ENCODE measurements at regions of chr4 and their contacts with region 1.

Region 1: DNA sequence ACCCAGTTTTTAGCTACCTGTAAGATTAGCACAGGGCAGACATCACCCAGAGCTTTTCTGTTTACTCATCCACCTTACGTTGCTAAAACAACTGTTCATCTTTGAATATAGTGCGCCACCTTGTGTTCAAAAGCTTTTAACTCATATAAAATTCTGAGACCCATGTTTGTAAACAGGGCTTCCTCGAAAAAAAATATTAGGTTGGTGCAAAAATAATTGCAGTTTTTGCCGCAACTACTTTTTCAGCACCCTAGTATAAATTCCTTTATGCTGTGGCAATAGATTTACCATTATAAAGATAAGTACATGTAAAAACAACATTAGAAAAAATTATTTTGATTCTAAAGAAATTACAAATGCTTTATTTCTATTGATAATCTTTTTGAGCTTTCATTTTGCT is 147.9 kb downstream of the LRBA start:
- DNase-seq: peak; percentile 41
- ATAC-seq: peak; percentile 96
- H3K4me3 ChIP-seq: no peak overlapping the region
- H3K27ac ChIP-seq: no peak overlapping the region
- H3K4me1 ChIP-seq: no peaks in the 10 kb centered on the region
- H3K27me3 ChIP-seq: no peaks in the 10 kb centered on the region
- CTCF ChIP-seq: peak; percentile 37 to 59 (median 46); a peak in 5 of 6 replicates
- EP300 ChIP-seq: no peak
- POLR2A ChIP-seq: no peak
- RAD21 ChIP-seq: peak; percentile 86

Region 2: DNA sequence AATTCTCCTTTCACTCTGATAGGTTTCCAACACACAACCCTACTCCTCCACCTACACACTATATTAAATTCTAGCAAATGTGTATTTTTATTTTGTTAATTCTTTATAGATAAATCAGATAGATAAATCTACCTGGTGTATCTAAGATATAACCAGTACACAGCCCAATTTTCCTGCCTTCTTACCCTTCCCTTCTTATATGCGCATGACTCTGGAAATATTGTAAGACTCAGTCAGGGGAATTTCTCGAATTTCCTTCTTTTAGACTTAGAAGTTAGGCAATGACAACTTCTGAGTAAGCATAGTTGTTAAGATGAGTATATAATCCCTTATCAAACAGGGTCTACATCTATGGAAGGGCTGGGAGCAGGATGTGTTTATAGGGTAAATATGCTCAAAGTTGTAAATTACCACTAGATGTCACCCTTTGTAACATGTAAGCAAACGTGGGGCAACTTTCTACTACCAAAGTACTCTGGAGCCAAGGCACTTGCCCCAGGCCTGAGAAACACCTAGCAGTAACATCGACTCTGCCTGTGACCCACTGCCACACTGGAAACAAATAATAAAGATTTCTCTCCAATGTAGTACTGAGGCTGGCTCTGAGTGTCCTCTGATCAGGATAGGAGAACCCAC is 1496.2 kb before region 1 on chr4:
- CTCF ChIA-PET with region 1: no interaction called
- POLR2A ChIA-PET with region 1: no interaction called
- RAD21 ChIA-PET with region 1: no interaction called
- SMC1A ChIA-PET with region 1: no interaction called
- in situ Hi-C with region 1: no loop called
- intact Hi-C with region 1: no loop called
- DNase-seq: no peak
- ATAC-seq: peak; percentile 92
- H3K4me3 ChIP-seq: no peak overlapping the region
- H3K27ac ChIP-seq: no peak overlapping the region
- H3K4me1 ChIP-seq: no peaks in the 10 kb centered on the region
- H3K27me3 ChIP-seq: no peaks in the 10 kb centered on the region
- CTCF ChIP-seq: peak; percentile 25 to 58 (median 39); a peak in 4 of 6 replicates
- EP300 ChIP-seq: no peak
- POLR2A ChIP-seq: no peak
- RAD21 ChIP-seq: peak; percentile 45

Region 3: GRCh38 chr4:149999485-150000074 is 867.6 kb before region 1 on chr4:
- CTCF ChIA-PET with region 1: interaction called, 3 read pairs
- POLR2A ChIA-PET with region 1: no interaction called
- RAD21 ChIA-PET with region 1: interaction called, 3 read pairs
- SMC1A ChIA-PET with region 1: no interaction called
- in situ Hi-C with region 1: no loop called
- intact Hi-C with region 1: loop called (anchors 5 kb)
- DNase-seq: no peak
- ATAC-seq: peak; percentile 63
- H3K4me3 ChIP-seq: no peak overlapping the region
- H3K27ac ChIP-seq: no peak overlapping the region
- H3K4me1 ChIP-seq: no peaks in the 10 kb centered on the region
- H3K27me3 ChIP-seq: no peaks in the 10 kb centered on the region
- CTCF ChIP-seq: peak; percentile 57 to 70 (median 61)
- EP300 ChIP-seq: no peak
- POLR2A ChIP-seq: no peak
- RAD21 ChIP-seq: peak; percentile 81

Region 4: GRCh38 chr4:150297861-150298474 is 569.2 kb before region 1 on chr4:
- CTCF ChIA-PET with region 1: interaction called, 107 read pairs
- POLR2A ChIA-PET with region 1: no interaction called
- RAD21 ChIA-PET with region 1: interaction called, 20 read pairs
- SMC1A ChIA-PET with region 1: interaction called, 47 read pairs
- in situ Hi-C with region 1: loop called (anchors 5 kb)
- intact Hi-C with region 1: loop called (anchors 1 kb)
- DNase-seq: peak; percentile 8
- ATAC-seq: peak; percentile 75
- H3K4me3 ChIP-seq: no peak overlapping the region
- H3K27ac ChIP-seq: no peak overlapping the region
- H3K4me1 ChIP-seq: no peaks in the 10 kb centered on the region
- H3K27me3 ChIP-seq: no peaks in the 10 kb centered on the region
- CTCF ChIP-seq: peak; percentile 49 to 64 (median 54)
- EP300 ChIP-seq: no peak
- POLR2A ChIP-seq: no peak
- RAD21 ChIP-seq: peak; percentile 84

Region 5: DNA sequence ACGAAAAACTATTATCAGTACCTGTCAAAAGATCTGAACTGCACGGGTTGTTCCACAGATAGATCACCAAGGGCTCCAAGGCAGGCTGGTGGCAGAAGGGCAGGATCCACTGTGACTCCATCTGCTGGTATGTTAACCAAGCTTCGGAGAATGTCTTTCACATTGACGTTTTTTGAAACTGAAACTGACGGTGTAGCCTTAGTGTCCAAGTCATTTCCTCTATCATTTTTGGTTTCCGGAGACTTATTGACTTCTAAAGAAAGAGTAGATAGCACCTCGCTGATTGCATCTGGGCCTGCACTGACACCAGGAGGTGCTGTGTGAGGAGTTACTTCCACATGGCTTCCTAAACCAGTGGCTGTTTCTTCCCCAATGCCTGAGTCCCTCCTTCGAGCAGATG is 39.0 kb before region 1 on chr4:
- CTCF ChIA-PET with region 1: interaction called, 19 read pairs
- POLR2A ChIA-PET with region 1: no interaction called
- RAD21 ChIA-PET with region 1: interaction called, 14 read pairs
- SMC1A ChIA-PET with region 1: interaction called, 8 read pairs
- in situ Hi-C with region 1: no loop called
- intact Hi-C with region 1: no loop called
- DNase-seq: peak; percentile 77
- ATAC-seq: peak; percentile 98
- H3K4me3 ChIP-seq: no peak overlapping the region
- H3K27ac ChIP-seq: peak overlapping the region; percentile 42
- H3K4me1 ChIP-seq: peaks cover 6% of the 10 kb centered on the region
- H3K27me3 ChIP-seq: no peaks in the 10 kb centered on the region
- CTCF ChIP-seq: peak; percentile 26 to 61 (median 41); a peak in 5 of 6 replicates
- EP300 ChIP-seq: no peak
- POLR2A ChIP-seq: no peak
- RAD21 ChIP-seq: peak; percentile 29; the same call in 1 of the 2 replicates

Region 6: GRCh38 chr4:150855981-150856510 is 11.1 kb before region 1 on chr4:
- CTCF ChIA-PET with region 1: interaction called, 44 read pairs
- POLR2A ChIA-PET with region 1: no interaction called
- RAD21 ChIA-PET with region 1: interaction called, 15 read pairs
- SMC1A ChIA-PET with region 1: interaction called, 22 read pairs
- in situ Hi-C with region 1: no loop called
- intact Hi-C with region 1: no loop called
- DNase-seq: no peak
- ATAC-seq: peak; percentile 89
- H3K4me3 ChIP-seq: no peak overlapping the region
- H3K27ac ChIP-seq: no peak overlapping the region
- H3K4me1 ChIP-seq: no peaks in the 10 kb centered on the region
- H3K27me3 ChIP-seq: no peaks in the 10 kb centered on the region
- CTCF ChIP-seq: no peak
- EP300 ChIP-seq: no peak
- POLR2A ChIP-seq: no peak
- RAD21 ChIP-seq: no peak

Region 7: DNA sequence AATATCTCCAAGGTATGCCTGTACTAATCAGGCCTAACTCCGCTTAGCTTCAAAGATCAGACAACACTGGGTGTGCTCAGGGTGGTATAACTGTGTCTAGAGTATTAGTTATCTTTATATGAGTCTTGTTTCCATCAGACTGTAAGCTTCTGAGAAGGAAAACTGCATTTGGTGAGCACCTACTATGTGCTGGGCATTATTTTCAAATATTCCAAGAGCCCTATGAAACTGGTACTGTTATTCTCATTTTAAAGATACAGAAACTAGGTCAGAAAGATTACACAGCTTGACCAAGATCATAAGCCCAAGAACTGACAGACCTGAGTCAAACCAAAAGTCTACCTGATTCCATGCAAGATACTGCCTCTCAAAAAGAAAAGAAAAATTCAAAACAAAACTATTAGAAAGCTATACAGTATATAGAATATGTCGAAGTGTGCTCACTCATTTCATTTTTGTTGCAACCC is 103.6 kb after region 1 on chr4:
- CTCF ChIA-PET with region 1: interaction called, 16 read pairs
- POLR2A ChIA-PET with region 1: no interaction called
- RAD21 ChIA-PET with region 1: interaction called, 6 read pairs
- SMC1A ChIA-PET with region 1: interaction called, 6 read pairs
- in situ Hi-C with region 1: no loop called
- intact Hi-C with region 1: no loop called
- DNase-seq: no peak
- ATAC-seq: peak; percentile 78
- H3K4me3 ChIP-seq: 0 out of 2 replicates have a peak overlapping the region, but pooled peaks have one; percentile 32
- H3K27ac ChIP-seq: no peak overlapping the region
- H3K4me1 ChIP-seq: peaks cover 29% of the 10 kb centered on the region
- H3K27me3 ChIP-seq: no peaks in the 10 kb centered on the region
- CTCF ChIP-seq: no peak
- EP300 ChIP-seq: no peak
- POLR2A ChIP-seq: no peak
- RAD21 ChIP-seq: no peak

Measured in GM12878 (cell line).